ENCODE measurements at regions of chr5 and their contacts with region 1.

Region 1: DNA sequence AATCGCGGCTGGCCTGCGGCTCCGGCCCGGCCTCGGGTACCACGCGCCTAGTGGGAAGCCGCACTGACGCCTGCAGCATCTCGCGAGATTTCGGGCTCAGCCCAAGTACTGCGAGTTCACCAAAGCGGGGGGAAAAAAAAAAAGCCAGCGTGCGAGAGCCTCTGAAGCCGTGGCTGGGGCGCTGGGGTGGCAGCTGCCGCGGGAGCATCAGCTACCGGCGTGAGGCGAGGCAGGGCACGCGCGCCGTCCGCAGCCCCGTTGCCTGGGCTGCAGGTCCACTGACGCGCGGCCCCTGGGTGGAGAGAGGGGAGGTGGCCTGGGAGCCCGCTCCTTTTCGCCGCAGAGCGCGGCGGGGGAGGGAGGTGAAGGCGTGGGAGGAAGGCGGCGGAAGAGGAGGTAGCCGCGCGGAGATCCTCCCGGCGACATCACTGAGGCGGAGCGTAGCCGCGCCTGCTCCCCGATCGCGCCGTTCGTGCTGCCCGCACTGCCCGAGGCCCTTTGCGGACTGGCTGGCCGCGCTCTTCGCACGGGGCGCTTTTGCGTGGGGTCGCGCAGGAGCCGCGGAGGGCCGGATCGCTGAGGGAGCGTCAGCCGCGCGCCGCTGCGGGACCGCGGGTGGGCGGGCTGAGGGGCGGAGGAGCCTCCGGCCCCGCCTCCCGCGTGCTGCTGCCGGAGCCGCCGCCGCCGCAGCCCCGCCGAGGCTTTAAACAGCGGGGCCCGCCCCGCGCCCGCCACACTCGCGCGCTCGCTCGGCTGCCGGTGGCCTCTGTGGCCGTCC is at the start of gene SLC12A2:
- DNase-seq: peak; percentile 85 to 97
- ATAC-seq: peak; percentile 83 to 84
- H3K4me3 ChIP-seq: peak within 1 kb of the TSS; percentile 88
- H3K27ac ChIP-seq: peak within 1 kb of the TSS; percentile 95 to 99
- H3K4me1 ChIP-seq: peaks cover 48% of the 10 kb centered on the region; the same call in 2 of the 3 replicates
- CTCF ChIP-seq: no peak
- EP300 ChIP-seq: no peak
- POLR2A ChIP-seq: peak; percentile 91
- RAD21 ChIP-seq: peak in 1 of 2 experiments; percentile 35; a peak in 2 of 5 replicates
- polyA plus RNA-seq, gene SLC12A2: 90.9 and 99.9 TPM in 2 replicates

Region 2: GRCh38 chr5:127875235-127876021 is 207.8 kb before region 1 on chr5:
- CTCF ChIA-PET with region 1: interaction called, 13 read pairs
- POLR2A ChIA-PET with region 1: interaction called, 11 read pairs
- DNase-seq: peak; percentile 61 to 93
- ATAC-seq: peak; percentile 94
- H3K4me3 ChIP-seq: no peak overlapping the region
- H3K27ac ChIP-seq: peak overlapping the region; percentile 56 to 75
- H3K4me1 ChIP-seq: peaks cover 46% of the 10 kb centered on the region
- CTCF ChIP-seq: peak; percentile 85
- EP300 ChIP-seq: no peak; a peak in 1 of 5 replicates
- POLR2A ChIP-seq: no peak
- RAD21 ChIP-seq: peak; percentile 93 to 94

Region 3: GRCh38 chr5:127934791-127935256 is 148.4 kb before region 1 on chr5:
- CTCF ChIA-PET with region 1: no interaction called
- POLR2A ChIA-PET with region 1: interaction called, 10 read pairs
- DNase-seq: peak; percentile 88 to 99
- ATAC-seq: peak; percentile 96
- H3K4me3 ChIP-seq: no peak overlapping the region
- H3K27ac ChIP-seq: peak overlapping the region; percentile 76 to 88
- H3K4me1 ChIP-seq: peaks cover 46% of the 10 kb centered on the region
- CTCF ChIP-seq: peak; percentile 39; the same call in 2 of the 3 replicates
- EP300 ChIP-seq: peak; percentile 97 to 98
- POLR2A ChIP-seq: no peak
- RAD21 ChIP-seq: peak; percentile 45 to 82

Region 4: DNA sequence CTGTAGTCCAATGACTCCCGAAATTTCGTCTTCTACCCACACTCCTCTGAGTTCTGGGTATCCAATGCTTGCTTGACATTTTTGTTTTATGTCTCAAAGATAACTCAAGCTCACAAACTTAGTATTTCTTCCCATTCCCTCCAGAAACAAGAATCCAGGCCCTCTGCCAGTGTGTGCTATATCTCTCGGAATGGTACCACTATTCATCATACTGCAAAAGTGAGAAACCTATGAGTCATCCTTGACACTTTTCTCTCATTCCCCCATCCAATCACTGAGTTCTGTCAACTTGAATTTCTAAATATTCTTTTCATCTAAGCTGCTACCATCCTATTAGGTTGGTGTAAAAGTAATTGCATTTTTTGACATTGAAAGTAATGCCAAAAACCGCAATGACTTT is 10.1 kb after region 1 on chr5:
- CTCF ChIA-PET with region 1: interaction called, 15 read pairs
- POLR2A ChIA-PET with region 1: no interaction called
- DNase-seq: no peak
- ATAC-seq: no peak; a peak in 1 of 6 replicates
- H3K4me3 ChIP-seq: no peak overlapping the region
- H3K27ac ChIP-seq: no peak overlapping the region
- H3K4me1 ChIP-seq: no peaks in the 10 kb centered on the region
- CTCF ChIP-seq: no peak
- EP300 ChIP-seq: no peak
- POLR2A ChIP-seq: no peak
- RAD21 ChIP-seq: no peak